MCF 10A (cell line): ENCODE measurements at regions of chr6 and their contacts with region 1.

Region 1: GRCh38 chr6:100116411-100117194 is 122.6 kb upstream of the MCHR2 start:
- DNase-seq: peak; percentile 74
- H3K4me3 Mint-ChIP-seq: no peak overlapping the region
- H3K27ac Mint-ChIP-seq: no peak overlapping the region
- H3K4me1 Mint-ChIP-seq: no peaks in the 10 kb centered on the region
- H3K27me3 Mint-ChIP-seq: no peaks in the 10 kb centered on the region
- CTCF ChIP-seq: peak; percentile 70

Region 2: DNA sequence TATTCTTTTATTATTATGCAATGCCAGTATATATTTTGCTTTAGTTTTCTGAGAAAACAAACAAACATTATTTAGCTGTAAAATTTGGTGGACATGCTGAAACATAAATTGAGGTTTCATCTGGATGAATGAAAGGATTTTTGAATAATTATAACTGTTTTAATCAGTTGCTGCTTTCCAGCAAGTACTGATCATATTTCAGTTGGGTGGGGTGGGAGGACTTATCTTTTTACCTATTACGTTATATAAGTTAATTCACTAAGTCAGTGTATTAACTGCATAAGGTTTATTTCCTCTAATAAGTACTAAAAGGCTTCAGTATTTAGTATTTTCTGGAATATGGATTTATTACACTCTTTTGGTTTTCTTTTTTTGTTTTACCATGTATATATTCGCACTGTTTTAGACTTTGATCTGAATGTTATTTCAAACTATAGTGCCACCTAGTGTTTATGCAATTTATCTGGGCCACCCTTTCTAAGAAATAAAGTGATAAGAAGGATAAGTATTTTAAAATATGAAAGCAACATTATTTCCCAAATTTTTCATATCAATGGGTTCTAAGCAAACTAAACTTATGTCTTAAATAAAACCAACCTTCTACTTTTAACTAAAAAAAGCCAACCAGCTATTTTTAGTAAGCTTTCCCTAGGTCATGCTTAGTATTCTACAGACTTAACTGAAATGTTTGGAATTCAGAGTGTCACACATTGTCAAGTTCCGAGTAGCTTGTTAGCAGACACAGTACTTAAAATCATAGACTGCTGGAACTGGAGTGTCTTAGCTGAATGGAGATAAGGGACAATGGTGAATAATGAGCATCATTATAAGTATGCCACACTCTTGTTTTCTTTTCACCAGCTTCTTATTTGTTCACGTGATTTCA is 17.2 kb before region 1 on chr6:
- CTCF ChIA-PET with region 1: interaction called, 25 read pairs
- POLR2A ChIA-PET with region 1: no interaction called
- intact Hi-C with region 1: no loop called
- DNase-seq: peak; percentile 38
- H3K4me3 Mint-ChIP-seq: no peak overlapping the region
- H3K27ac Mint-ChIP-seq: no peak overlapping the region
- H3K4me1 Mint-ChIP-seq: peaks cover 4% of the 10 kb centered on the region
- H3K27me3 Mint-ChIP-seq: no peaks in the 10 kb centered on the region
- CTCF ChIP-seq: peak; percentile 26

Region 3: GRCh38 chr6:100257793-100258395 is 141.3 kb after region 1 on chr6:
- CTCF ChIA-PET with region 1: interaction called, 8 read pairs
- POLR2A ChIA-PET with region 1: no interaction called
- intact Hi-C with region 1: loop called (anchors 10 kb)
- DNase-seq: peak; percentile 45
- H3K4me3 Mint-ChIP-seq: no peak overlapping the region
- H3K27ac Mint-ChIP-seq: peak overlapping the region; percentile 17
- H3K4me1 Mint-ChIP-seq: peaks cover 12% of the 10 kb centered on the region
- H3K27me3 Mint-ChIP-seq: no peaks in the 10 kb centered on the region
- CTCF ChIP-seq: peak; percentile 35

Region 4: GRCh38 chr6:100376103-100376502 is 259.5 kb after region 1 on chr6:
- CTCF ChIA-PET with region 1: no interaction called
- POLR2A ChIA-PET with region 1: no interaction called
- intact Hi-C with region 1: no loop called
- DNase-seq: no peak
- H3K4me3 Mint-ChIP-seq: no peak overlapping the region
- H3K27ac Mint-ChIP-seq: no peak overlapping the region
- H3K4me1 Mint-ChIP-seq: no peaks in the 10 kb centered on the region
- H3K27me3 Mint-ChIP-seq: no peaks in the 10 kb centered on the region
- CTCF ChIP-seq: no peak

Region 5: DNA sequence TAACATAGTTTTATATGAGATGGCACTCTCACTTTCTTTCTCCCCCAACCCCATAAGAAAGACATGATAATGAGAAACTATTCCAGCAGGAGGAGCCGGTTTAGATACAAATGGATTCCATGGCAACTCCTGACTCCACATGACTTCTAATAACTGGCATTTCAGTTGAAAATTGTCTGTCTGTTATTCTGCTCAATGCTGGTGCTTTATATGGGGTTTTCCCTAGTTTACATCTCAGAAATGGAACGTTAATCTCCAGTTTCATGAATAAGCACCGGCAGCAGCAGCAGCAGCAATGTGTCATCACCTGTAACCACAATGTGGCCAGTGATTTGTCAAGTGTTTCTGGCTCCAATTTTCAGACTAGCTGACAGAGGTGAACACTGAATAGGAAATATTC is 356.1 kb after region 1 on chr6:
- CTCF ChIA-PET with region 1: interaction called, 123 read pairs
- POLR2A ChIA-PET with region 1: no interaction called
- intact Hi-C with region 1: no loop called
- DNase-seq: peak; percentile 65
- H3K4me3 Mint-ChIP-seq: no peak overlapping the region
- H3K27ac Mint-ChIP-seq: no peak overlapping the region
- H3K4me1 Mint-ChIP-seq: peaks cover 7% of the 10 kb centered on the region
- H3K27me3 Mint-ChIP-seq: no peaks in the 10 kb centered on the region
- CTCF ChIP-seq: no peak

Region 6: DNA sequence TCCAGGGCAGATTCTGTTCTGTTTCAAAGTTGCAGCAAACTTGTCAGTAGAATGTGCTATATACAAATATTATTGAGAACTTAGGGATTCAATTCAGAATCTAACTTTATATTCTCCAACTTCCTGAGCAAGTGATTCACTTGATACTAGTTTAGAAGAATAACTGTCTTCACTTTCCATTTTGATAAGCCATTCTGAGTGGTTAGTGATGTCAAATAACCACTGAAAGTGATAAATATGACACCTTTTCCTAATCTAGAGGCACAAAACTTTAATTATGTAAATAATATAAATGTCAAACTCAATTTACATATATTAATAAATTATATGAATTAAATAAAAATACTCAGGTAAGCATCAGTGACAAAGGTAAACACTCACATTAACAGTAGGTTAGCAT is 368.7 kb after region 1 on chr6:
- CTCF ChIA-PET with region 1: interaction called, 123 read pairs
- POLR2A ChIA-PET with region 1: interaction called, 4 read pairs
- intact Hi-C with region 1: no loop called
- DNase-seq: no peak
- H3K4me3 Mint-ChIP-seq: no peak overlapping the region
- H3K27ac Mint-ChIP-seq: no peak overlapping the region
- H3K4me1 Mint-ChIP-seq: peaks cover 6% of the 10 kb centered on the region
- H3K27me3 Mint-ChIP-seq: no peaks in the 10 kb centered on the region
- CTCF ChIP-seq: no peak

Region 7: DNA sequence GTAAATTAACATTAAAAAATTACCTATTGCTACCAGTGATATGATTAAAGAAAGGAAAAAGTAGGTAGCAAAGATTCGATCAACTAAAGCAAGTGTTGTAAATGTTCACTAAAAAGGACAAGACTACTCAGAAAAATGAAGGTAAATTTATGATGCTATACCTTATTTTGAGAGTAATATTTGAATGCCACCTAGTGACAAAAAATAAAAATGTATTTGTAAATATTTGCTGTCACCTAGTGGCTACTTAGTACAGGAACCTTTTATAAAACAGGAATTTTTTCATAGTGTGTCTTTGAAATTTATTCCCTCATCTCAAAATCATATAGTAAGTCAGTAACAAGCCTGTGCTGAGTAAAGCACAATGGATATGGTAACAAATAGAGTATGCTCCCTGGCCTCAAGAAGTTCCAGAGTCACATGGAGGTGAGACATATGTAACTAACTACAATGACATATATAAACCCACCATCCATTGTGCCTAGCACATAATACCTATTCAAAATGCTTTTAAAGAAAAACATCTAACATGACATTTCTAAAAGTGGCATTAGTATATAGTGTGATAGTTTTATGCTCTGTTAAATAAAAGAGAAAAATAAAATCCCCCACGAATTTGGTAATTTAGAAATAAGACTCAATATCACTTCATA is 541.2 kb after region 1 on chr6:
- CTCF ChIA-PET with region 1: interaction called, 18 read pairs
- POLR2A ChIA-PET with region 1: no interaction called
- intact Hi-C with region 1: loop called (anchors 2 kb)
- DNase-seq: peak; percentile 34
- H3K4me3 Mint-ChIP-seq: no peak overlapping the region
- H3K27ac Mint-ChIP-seq: no peak overlapping the region
- H3K4me1 Mint-ChIP-seq: peaks cover 3% of the 10 kb centered on the region
- H3K27me3 Mint-ChIP-seq: no peaks in the 10 kb centered on the region
- CTCF ChIP-seq: peak; percentile 47